ENCODE measurements at regions of chr12 and their contacts with region 1.

Region 1: GRCh38 chr12:50776749-50777728 is 13.1 kb downstream of the ATF1 start:
- DNase-seq: no peak
- ATAC-seq: no peak
- H3K4me3 ChIP-seq: no peak overlapping the region
- H3K27ac ChIP-seq: no peak overlapping the region
- H3K4me1 ChIP-seq: peaks cover 11% of the 10 kb centered on the region
- H3K27me3 ChIP-seq: no peaks in the 10 kb centered on the region
- CTCF ChIP-seq: no peak

Region 2: DNA sequence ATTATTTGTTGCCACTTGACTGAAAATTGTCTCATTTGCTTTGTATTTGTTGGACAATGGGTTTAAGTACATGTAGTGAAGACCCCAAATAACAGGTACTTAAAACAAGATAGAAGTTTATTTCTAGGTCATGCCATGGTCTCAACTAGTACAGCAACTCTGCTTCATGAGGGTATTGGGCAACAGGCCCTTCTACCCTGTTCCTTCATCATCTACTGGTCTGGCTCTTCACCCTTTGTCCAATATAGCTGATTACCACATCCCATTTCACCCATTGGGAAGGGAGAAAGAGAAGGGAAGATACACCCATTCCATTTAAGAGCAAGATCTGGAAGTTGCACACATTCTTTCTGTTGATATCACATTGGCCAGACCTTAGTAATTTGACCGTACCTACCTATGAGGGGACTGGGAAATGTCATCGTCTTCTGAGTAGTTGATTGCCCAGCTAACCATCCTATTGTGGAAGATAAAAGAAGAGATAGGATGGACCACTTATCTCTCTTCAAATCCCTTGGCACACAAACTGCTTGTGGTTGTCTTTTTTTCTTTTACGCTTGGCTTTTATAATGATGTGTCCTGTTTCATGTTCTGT is 167.7 kb before region 1 on chr12:
- CTCF ChIA-PET with region 1: no interaction called
- POLR2A ChIA-PET with region 1: interaction called, 20 read pairs
- intact Hi-C with region 1: no loop called
- DNase-seq: no peak
- ATAC-seq: no peak
- H3K4me3 ChIP-seq: no peak overlapping the region
- H3K27ac ChIP-seq: no peak overlapping the region
- H3K4me1 ChIP-seq: 0 out of 2 replicates have a peak, but pooled peaks cover 4% of the 10 kb centered on the region
- H3K27me3 ChIP-seq: no peaks in the 10 kb centered on the region
- CTCF ChIP-seq: no peak

Region 3: DNA sequence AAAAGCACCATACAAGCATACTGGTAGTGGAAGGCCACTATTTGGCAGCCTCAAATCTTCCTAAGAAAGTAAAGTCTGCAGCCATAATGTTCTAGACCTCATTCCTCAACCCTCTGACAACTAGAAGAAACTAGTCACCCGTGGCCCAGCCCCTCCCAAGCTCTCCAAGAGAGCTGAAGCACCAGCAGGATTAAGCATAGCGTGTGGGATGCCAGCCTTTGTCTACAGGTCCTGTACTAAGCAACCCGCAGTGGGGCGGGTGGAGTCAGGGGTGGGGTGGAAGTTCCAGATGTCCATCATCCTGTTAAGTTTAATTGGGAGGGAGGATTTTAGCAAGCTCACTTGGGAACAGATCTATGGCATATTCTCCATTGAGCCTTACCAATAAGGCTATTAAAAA is 234.9 kb after region 1 on chr12:
- CTCF ChIA-PET with region 1: no interaction called
- POLR2A ChIA-PET with region 1: interaction called, 13 read pairs
- intact Hi-C with region 1: no loop called
- DNase-seq: no peak
- ATAC-seq: no peak
- H3K4me3 ChIP-seq: no peak overlapping the region
- H3K27ac ChIP-seq: no peak overlapping the region
- H3K4me1 ChIP-seq: no peaks in the 10 kb centered on the region
- H3K27me3 ChIP-seq: no peaks in the 10 kb centered on the region
- CTCF ChIP-seq: no peak

Region 4: DNA sequence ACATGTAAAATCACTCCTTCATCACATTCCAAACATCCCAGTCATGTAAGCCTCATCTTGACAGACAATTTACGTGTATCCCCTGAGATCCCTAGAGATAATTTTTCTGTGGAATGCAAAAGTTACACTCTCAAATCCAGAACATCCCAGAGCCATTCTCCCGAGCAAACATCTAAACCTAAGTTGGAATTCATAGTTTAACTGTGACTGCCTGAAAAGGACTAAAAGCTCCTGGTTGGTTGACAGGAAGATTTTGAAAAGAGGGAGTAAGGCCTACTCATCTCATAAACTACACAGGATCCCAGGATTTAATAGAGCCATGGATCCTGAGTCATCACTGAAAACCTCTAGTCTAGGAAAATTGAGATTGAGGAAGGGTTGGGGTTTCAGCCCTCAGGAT is 937.6 kb after region 1 on chr12:
- CTCF ChIA-PET with region 1: no interaction called
- POLR2A ChIA-PET with region 1: interaction called, 10 read pairs
- intact Hi-C with region 1: no loop called
- DNase-seq: peak; percentile 83
- ATAC-seq: peak; percentile 96
- H3K4me3 ChIP-seq: 0 out of 2 replicates have a peak overlapping the region, but pooled peaks have one; percentile 3
- H3K27ac ChIP-seq: peak overlapping the region; percentile 65
- H3K4me1 ChIP-seq: peaks cover 16% of the 10 kb centered on the region
- H3K27me3 ChIP-seq: no peaks in the 10 kb centered on the region
- CTCF ChIP-seq: no peak

Measured in PC-3 (cell line).